ENCODE measurements at regions of chr2 and their contacts with region 1.

Region 1: DNA sequence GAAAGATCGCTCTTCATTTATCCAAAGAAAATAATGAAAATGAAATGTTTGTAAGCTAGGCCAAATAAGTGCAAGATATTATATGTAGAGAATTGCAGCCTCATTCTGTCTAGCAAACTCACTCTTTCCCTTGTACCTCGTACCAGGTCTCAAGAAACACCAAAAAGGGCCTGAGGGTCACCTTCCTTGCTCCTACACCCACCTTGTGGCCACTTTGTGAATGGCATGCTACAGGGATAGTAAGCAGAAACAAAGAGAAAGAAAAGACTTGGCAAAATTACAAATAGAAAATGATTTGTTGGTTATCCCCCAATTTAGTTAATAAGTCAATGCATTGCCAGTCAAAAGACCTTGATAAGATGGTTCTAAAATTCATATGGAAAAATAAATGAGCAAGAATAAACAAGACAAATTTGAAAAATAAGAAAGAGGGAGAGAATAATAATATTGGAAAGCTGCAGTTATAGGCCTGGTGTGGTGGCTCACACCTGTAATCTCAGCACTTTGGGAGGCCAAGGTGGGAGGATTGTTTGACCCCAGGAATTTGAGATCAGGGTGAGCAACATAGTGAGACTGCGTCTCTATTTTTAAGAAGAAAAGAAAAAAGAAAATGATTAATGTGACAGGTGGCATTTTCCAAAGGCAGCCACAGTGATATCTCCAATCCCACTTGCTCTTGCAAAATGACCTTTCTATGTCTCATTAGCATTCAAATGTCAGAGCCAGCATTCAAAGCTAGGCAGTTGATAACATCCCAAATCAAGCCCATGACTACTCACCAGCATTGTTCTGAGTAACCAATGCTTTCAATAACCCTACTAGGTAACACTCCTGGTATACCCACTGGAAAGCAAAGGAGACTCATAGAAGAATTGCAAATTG is 38.8 kb upstream of the BMP10 start:
- DNase-seq: peak in 1 of 2 experiments; percentile 53
- H3K4me3 ChIP-seq: no peak overlapping the region
- H3K27ac ChIP-seq: no peak overlapping the region
- H3K4me1 ChIP-seq: peaks cover 22% of the 10 kb centered on the region
- H3K27me3 ChIP-seq: no peaks in the 10 kb centered on the region
- CTCF ChIP-seq: peak; percentile 86

Region 2: GRCh38 chr2:68467077-68467960 is 442.7 kb before region 1 on chr2 and contains the starts of genes APLF and FBXO48:
- CTCF ChIA-PET with region 1: no interaction called
- POLR2A ChIA-PET with region 1: interaction called, 7 read pairs
- intact Hi-C with region 1: loop called (anchors 5 kb)
- DNase-seq: peak; percentile 98
- H3K4me3 ChIP-seq: peak within 1 kb of the TSS; percentile 76
- H3K27ac ChIP-seq: peak within 1 kb of the TSS; percentile 48
- H3K4me1 ChIP-seq: peaks cover 17% of the 10 kb centered on the region
- H3K27me3 ChIP-seq: no peaks in the 10 kb centered on the region
- CTCF ChIP-seq: no peak
- total RNA-seq, gene APLF: 3.9 and 4.5 TPM in 2 replicates
- total RNA-seq, gene FBXO48: 1.2 and 1.6 TPM in 2 replicates

Region 3: DNA sequence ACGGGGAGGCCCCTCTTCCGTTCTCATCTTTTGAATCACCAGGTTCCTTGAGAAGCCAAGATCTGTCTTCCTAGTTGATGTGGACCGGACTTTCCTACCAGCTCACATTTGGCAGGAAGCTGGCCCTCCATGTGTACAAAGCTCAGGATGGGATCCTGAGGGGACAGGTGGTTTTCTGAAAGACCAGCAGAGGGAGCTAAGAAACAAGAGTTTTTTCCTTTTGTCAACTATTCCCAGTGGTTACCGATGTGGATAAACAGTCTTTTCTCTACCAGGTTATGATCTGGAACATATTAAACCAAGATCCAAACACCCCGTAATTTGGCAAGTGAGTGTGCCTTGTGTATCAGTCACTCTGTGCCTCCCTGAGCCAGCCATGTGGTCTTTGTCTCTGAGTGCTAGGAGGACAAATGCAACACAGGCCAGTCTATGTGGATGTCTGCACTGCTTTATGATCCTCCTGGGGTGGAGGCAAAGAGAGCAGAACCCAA is 200.6 kb before region 1 on chr2:
- CTCF ChIA-PET with region 1: interaction called, 3 read pairs
- POLR2A ChIA-PET with region 1: no interaction called
- intact Hi-C with region 1: loop called (anchors 1 kb)
- DNase-seq: peak in 1 of 2 experiments; percentile 16
- H3K4me3 ChIP-seq: no peak overlapping the region
- H3K27ac ChIP-seq: no peak overlapping the region
- H3K4me1 ChIP-seq: no peaks in the 10 kb centered on the region
- H3K27me3 ChIP-seq: no peaks in the 10 kb centered on the region
- CTCF ChIP-seq: peak; percentile 74

Region 4: GRCh38 chr2:68751397-68752339 is 158.4 kb before region 1 on chr2:
- CTCF ChIA-PET with region 1: interaction called, 7 read pairs
- POLR2A ChIA-PET with region 1: no interaction called
- intact Hi-C with region 1: loop called (anchors 1 kb)
- DNase-seq: peak; percentile 59 to 79
- H3K4me3 ChIP-seq: no peak overlapping the region
- H3K27ac ChIP-seq: no peak overlapping the region
- H3K4me1 ChIP-seq: no peaks in the 10 kb centered on the region
- H3K27me3 ChIP-seq: no peaks in the 10 kb centered on the region
- CTCF ChIP-seq: peak; percentile 85

Region 5: GRCh38 chr2:68828887-68829708 is 80.9 kb before region 1 on chr2:
- CTCF ChIA-PET with region 1: no interaction called
- POLR2A ChIA-PET with region 1: no interaction called
- intact Hi-C with region 1: loop called (anchors 1 kb)
- DNase-seq: peak in 1 of 2 experiments; percentile 79
- H3K4me3 ChIP-seq: no peak overlapping the region
- H3K27ac ChIP-seq: no peak overlapping the region
- H3K4me1 ChIP-seq: no peaks in the 10 kb centered on the region
- H3K27me3 ChIP-seq: no peaks in the 10 kb centered on the region
- CTCF ChIP-seq: no peak

Region 6: GRCh38 chr2:68889500-68890185 is 20.4 kb before region 1 on chr2:
- CTCF ChIA-PET with region 1: no interaction called
- POLR2A ChIA-PET with region 1: interaction called, 8 read pairs
- intact Hi-C with region 1: loop called (anchors 1 kb)
- DNase-seq: peak in 1 of 2 experiments; percentile 77
- H3K4me3 ChIP-seq: no peak overlapping the region
- H3K27ac ChIP-seq: no peak overlapping the region
- H3K4me1 ChIP-seq: no peaks in the 10 kb centered on the region
- H3K27me3 ChIP-seq: no peaks in the 10 kb centered on the region
- CTCF ChIP-seq: no peak

Region 7: DNA sequence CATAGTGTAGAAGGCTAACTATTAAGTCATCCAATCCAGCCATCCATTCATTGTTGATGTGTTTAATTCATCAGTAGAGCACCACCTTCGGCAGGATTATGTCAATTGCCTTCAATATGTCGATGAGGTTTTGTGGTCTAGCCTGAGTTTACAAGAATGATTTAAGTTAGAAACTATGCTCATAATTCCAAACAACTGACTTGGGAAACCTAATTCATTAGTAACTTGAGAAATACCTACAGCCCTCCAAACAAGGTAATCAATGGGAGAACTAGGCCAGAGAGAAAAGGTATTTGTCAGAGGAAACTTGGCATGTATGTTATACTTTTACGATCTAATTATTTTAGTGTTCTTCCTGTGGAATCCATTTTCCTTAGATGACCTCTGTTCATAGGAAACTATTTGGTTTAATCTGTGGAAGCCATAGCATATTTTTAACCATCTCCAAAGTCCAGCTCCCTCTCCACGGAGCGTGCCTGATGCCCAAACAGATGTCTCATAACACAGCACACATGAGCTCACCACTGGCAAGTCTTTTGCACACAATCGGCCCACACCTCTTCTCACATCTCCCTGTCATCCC is 328.5 kb after region 1 on chr2:
- CTCF ChIA-PET with region 1: no interaction called
- POLR2A ChIA-PET with region 1: no interaction called
- intact Hi-C with region 1: no loop called
- DNase-seq: no peak
- H3K4me3 ChIP-seq: no peak overlapping the region
- H3K27ac ChIP-seq: no peak overlapping the region
- H3K4me1 ChIP-seq: no peaks in the 10 kb centered on the region
- H3K27me3 ChIP-seq: no peaks in the 10 kb centered on the region
- CTCF ChIP-seq: no peak

Region 8: GRCh38 chr2:69449906-69450305 is 539.9 kb after region 1 on chr2:
- CTCF ChIA-PET with region 1: no interaction called
- POLR2A ChIA-PET with region 1: no interaction called
- intact Hi-C with region 1: no loop called
- DNase-seq: no peak
- H3K4me3 ChIP-seq: no peak overlapping the region
- H3K27ac ChIP-seq: no peak overlapping the region
- H3K4me1 ChIP-seq: no peaks in the 10 kb centered on the region
- H3K27me3 ChIP-seq: no peaks in the 10 kb centered on the region
- CTCF ChIP-seq: no peak